ENCODE measurements at regions of chr19 and their contacts with region 1.

Region 1: DNA sequence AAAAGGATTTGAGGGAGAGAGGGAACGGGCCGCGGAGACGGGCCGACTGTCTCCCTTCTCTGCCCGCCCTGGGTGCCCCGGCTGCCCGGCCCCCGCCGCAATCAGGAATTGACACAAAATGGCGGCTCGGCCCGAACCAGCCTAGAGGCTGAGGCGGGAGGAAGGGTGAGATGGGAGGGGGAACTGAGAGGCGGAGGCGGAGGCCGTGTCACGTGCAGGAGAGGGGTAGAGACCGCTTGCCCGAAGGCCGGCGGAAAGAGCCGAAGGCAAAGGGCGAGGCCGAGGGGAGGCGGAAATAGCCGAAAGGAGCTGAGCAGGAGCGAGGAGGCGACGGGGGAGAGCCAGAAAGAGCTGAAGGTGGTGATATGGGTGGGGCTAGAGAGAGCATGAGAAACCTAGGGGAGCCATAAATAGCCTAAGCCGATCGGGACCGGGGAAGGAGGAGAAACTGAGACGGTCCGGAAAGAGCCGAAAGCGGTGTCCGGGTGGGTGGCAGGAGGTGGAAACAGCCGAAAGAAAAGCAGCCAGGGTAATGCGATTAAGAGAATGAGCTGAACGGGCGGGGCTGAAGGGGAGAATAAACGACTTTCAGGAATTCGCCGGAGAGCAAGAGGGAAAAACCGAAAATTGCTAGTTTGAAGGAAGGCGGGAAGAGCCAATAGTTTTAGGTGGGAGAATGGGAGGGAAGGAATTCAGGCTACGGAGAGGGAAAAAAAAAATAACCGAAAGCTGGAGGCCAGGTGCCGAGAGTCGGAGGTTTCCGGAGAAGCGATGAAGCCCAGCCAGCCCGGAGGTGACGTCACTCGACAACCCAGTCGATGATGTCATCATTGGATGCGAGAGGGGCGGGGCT is at the start of gene ZC3H4:
- DNase-seq: peak; percentile 100
- ATAC-seq: peak; percentile 91
- H3K4me3 Mint-ChIP-seq: peak within 1 kb of the TSS; percentile 93
- H3K27ac Mint-ChIP-seq: peak within 1 kb of the TSS; percentile 100
- H3K4me1 Mint-ChIP-seq: peaks cover 24% of the 10 kb centered on the region
- H3K27me3 Mint-ChIP-seq: no peaks in the 10 kb centered on the region
- total RNA-seq, gene ZC3H4: 88.6 to 128 TPM

Region 2: GRCh38 chr19:46600384-46601317 is 512.6 kb before region 1 on chr19:
- CTCF ChIA-PET with region 1: no interaction called
- POLR2A ChIA-PET with region 1: no interaction called
- intact Hi-C with region 1: loop called in 1 of 2 experiments (anchors 2 kb)
- DNase-seq: peak; percentile 99
- ATAC-seq: peak; percentile 86
- H3K4me3 Mint-ChIP-seq: peak overlapping the region; percentile 84
- H3K27ac Mint-ChIP-seq: peak overlapping the region; percentile 100
- H3K4me1 Mint-ChIP-seq: peaks cover 33% of the 10 kb centered on the region
- H3K27me3 Mint-ChIP-seq: no peaks in the 10 kb centered on the region

Region 3: GRCh38 chr19:47047763-47048405 is 65.3 kb before region 1 on chr19:
- CTCF ChIA-PET with region 1: no interaction called
- POLR2A ChIA-PET with region 1: interaction called, 7 read pairs
- intact Hi-C with region 1: loop called (anchors 1 to 5 kb)
- DNase-seq: peak; percentile 92
- ATAC-seq: peak; percentile 73
- H3K4me3 Mint-ChIP-seq: peak overlapping the region; percentile 90
- H3K27ac Mint-ChIP-seq: peak overlapping the region; percentile 86
- H3K4me1 Mint-ChIP-seq: peaks cover 8% of the 10 kb centered on the region
- H3K27me3 Mint-ChIP-seq: no peaks in the 10 kb centered on the region

Region 4: DNA sequence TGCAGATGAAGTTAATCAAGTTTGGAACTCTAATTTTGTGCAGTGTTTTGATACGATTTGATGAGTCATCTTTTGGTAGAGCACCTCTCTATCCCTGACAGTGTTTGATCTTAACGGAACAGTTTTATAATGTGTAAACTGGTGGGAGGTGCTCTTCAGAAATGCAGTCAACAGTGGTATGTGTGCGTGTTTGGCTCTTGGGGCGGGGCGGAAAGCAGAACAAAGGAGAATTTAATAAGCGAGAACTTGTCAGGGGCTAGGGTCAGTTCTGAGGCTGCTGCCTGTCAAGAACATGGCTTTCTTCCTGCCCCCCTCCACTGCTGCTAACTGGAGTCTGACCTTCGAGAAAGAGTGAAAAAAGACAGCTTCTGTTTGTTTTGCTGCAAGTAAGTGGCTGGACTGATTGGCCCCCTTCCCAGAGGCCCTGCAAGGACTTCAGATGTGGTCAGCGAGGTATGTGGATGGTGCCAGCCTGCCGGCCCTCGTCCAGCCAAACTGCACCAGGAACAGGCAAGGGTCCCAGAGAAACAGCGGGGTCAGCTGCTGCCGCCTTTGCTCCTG is 77.0 kb after region 1 on chr19:
- CTCF ChIA-PET with region 1: interaction called, 3 read pairs
- POLR2A ChIA-PET with region 1: interaction called, 11 read pairs
- intact Hi-C with region 1: loop called (anchors 1 kb)
- DNase-seq: peak; percentile 84
- ATAC-seq: peak; percentile 57
- H3K4me3 Mint-ChIP-seq: peak overlapping the region; percentile 48
- H3K27ac Mint-ChIP-seq: peak overlapping the region; percentile 84
- H3K4me1 Mint-ChIP-seq: peaks cover 71% of the 10 kb centered on the region
- H3K27me3 Mint-ChIP-seq: no peaks in the 10 kb centered on the region

Region 5: DNA sequence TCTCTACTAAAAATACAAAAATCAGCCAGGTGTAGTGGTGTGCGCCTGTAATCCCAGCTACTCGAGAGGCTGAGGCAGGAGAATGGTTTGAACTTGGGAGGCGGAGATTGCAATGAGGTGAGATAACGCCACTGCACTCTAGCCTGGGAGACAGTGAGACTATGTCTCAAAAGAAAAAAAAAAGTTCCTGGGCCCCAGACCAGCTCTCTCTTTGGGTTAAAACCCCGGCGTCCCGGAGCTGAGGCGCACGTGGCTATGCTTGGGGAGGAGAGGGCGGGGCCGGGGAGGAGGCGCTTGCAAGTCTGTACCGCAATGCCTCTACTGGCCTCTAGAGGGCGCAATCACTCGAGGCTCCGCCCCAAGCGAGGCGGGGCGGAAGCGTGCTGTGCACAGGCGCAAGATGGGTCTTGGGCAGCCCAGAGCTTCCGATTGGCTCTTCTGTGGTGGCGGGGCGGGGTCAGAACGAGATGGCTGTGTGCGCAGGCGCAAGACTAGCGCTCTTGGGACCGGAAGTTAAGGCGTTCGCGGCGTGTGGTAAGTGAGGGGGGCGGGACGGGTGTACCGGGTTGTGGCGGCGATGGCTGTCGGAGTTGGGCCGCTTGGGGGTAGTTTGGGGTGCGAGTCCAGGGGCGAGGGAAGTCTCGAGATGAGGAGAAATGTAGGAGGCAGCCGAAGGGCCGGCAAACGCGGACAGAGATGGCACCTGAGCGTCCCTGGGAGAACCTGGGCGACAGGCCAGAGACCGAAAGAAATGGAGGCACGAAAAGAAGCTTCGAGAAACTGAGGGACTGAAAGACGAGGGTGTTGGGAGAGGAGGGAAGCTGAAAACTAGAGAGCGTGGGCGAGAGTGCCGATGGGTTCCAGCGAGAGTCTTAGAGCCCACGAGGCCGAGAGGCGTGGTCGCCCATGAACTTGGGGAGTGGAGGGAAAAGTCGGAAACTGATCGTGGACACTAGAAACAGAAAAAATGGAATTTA is 235.9 kb after region 1 on chr19 and contains the start of gene DHX34:
- CTCF ChIA-PET with region 1: interaction called, 5 read pairs
- POLR2A ChIA-PET with region 1: interaction called, 3 read pairs
- intact Hi-C with region 1: loop called (anchors 1 to 5 kb)
- DNase-seq: peak; percentile 99
- ATAC-seq: peak; percentile 98
- H3K4me3 Mint-ChIP-seq: peak within 1 kb of the TSS; percentile 92
- H3K27ac Mint-ChIP-seq: peak within 1 kb of the TSS; percentile 94
- H3K4me1 Mint-ChIP-seq: peaks cover 35% of the 10 kb centered on the region
- H3K27me3 Mint-ChIP-seq: no peaks in the 10 kb centered on the region
- total RNA-seq, gene DHX34: 15.4 to 17.9 TPM

Region 6: GRCh38 chr19:48255376-48256303 is 1142.4 kb after region 1 on chr19 and contains the start of gene CARD8:
- CTCF ChIA-PET with region 1: no interaction called
- POLR2A ChIA-PET with region 1: no interaction called
- intact Hi-C with region 1: loop called in 1 of 2 experiments (anchors 5 kb)
- DNase-seq: peak; percentile 89
- ATAC-seq: peak; percentile 89
- H3K4me3 Mint-ChIP-seq: peak within 1 kb of the TSS; percentile 92
- H3K27ac Mint-ChIP-seq: peak within 1 kb of the TSS; percentile 98
- H3K4me1 Mint-ChIP-seq: peaks cover 63% of the 10 kb centered on the region
- H3K27me3 Mint-ChIP-seq: no peaks in the 10 kb centered on the region
- total RNA-seq, gene CARD8: 109 to 118 TPM

Measured in activated CD4-positive, alpha-beta T cell treated with anti-CD3 and anti-CD28 coated beads for 36 hours (primary cell).